T-cell (primary cell): ENCODE measurements at regions of chr9 and their contacts with region 1.

Region 1: DNA sequence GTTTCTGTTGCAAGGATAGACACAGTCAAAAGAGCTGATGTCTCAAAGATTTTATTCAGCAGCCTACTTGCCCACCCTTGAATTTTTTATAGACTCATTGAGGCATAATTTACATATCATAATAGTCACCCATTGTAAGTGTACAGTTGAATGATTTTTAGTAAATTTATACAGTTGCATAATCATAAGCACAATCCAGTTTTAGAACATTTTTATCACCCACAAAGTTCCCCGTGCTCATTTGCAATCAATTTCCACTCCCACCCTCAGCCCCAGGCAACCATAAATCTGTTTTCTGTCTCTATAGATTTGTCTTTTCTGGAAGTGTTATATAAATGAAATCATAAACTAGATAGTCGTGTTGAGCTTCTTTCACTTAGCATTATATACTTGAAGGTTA is 517.7 kb downstream of the TLE1 start:
- DNase-seq: no peak
- ATAC-seq: no peak
- H3K4me3 ChIP-seq: no peak overlapping the region
- H3K4me3 Mint-ChIP-seq: no peak overlapping the region
- H3K27ac ChIP-seq: no peak overlapping the region
- H3K27ac Mint-ChIP-seq: no peak overlapping the region
- H3K4me1 ChIP-seq: no peaks in the 10 kb centered on the region
- H3K4me1 Mint-ChIP-seq: no peaks in the 10 kb centered on the region
- H3K27me3 ChIP-seq: no peaks in the 10 kb centered on the region
- H3K27me3 Mint-ChIP-seq: no peaks in the 10 kb centered on the region

Region 2: DNA sequence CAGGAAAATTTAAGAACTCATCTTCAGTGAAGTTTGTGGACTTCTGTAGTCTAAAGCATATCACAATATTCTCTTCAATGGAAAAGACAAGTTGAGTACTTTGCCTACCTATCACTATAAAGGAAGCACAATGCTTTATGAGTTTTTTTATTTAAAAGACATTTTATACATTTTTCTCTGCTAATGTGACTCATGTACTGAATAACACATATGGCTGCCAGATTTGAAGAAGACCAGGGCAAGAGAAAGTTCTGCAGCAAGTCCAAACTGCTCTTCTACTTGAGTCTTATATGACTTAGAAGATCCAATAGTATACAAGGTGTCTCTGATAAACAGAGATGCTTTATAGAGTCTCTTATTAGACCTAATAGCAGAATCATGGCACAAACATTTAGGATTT is 621.5 kb before region 1 on chr9:
- CTCF ChIA-PET with region 1: interaction called in 1 of 2 experiments, 10 read pairs
- POLR2A ChIA-PET with region 1: no interaction called
- DNase-seq: no peak
- ATAC-seq: no peak
- H3K4me3 ChIP-seq: no peak overlapping the region
- H3K4me3 Mint-ChIP-seq: no peak overlapping the region
- H3K27ac ChIP-seq: no peak overlapping the region
- H3K27ac Mint-ChIP-seq: no peak overlapping the region
- H3K4me1 ChIP-seq: no peaks in the 10 kb centered on the region
- H3K4me1 Mint-ChIP-seq: no peaks in the 10 kb centered on the region
- H3K27me3 ChIP-seq: no peaks in the 10 kb centered on the region
- H3K27me3 Mint-ChIP-seq: no peaks in the 10 kb centered on the region